ENCODE measurements at regions of chrX and their contacts with region 1.

Region 1: DNA sequence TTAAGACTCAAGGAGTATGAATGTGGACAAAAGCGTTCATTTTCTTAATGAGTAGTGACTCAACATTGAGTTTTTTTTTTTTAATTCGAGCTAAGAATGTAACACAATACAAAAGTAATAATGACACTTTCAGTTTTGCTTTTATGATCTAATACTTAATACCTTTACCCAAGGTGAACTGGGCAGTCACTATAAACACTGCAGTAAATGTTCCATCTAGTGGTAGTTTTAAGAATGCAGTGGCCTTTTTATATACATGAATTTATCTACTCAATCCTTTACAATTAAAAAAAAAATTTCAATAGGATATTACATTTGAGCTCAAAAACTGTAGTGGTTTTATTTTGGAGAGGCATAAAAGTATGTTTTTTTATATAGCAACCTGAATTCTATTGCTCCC is 33.9 kb downstream of the PDK3 start:
- DNase-seq: no peak
- H3K4me3 ChIP-seq: no peak overlapping the region
- H3K27ac ChIP-seq: no peak overlapping the region
- H3K4me1 ChIP-seq: peaks cover 0 to 7% of the 10 kb centered on the region in 2 donors
- H3K27me3 ChIP-seq: no peaks in the 10 kb centered on the region
- CTCF ChIP-seq: peak; percentile 34 to 54 (median 43)

Region 2: GRCh38 chrX:24693453-24694202 is 194.7 kb after region 1 on chrX and contains the start of gene POLA1:
- intact Hi-C with region 1: loop called (anchors 10 kb)
- DNase-seq: peak; percentile 61 to 95
- H3K4me3 ChIP-seq: peak within 1 kb of the TSS; percentile 50 to 77
- H3K27ac ChIP-seq: peak within 1 kb of the TSS; percentile 76 to 84
- H3K4me1 ChIP-seq: no peaks in the 10 kb centered on the region
- H3K27me3 ChIP-seq: no peaks in the 10 kb centered on the region
- CTCF ChIP-seq: peak in 1 of 3 experiments; percentile 16
- total RNA-seq, gene POLA1: 6.0 TPM

Measured in ascending aorta (tissue), 2 donors.